Activated CD4-positive, alpha-beta T cell treated with anti-CD3 and anti-CD28 coated beads for 36 hours (primary cell): ENCODE measurements at regions of chr14 and their contacts with region 1.

Region 1: DNA sequence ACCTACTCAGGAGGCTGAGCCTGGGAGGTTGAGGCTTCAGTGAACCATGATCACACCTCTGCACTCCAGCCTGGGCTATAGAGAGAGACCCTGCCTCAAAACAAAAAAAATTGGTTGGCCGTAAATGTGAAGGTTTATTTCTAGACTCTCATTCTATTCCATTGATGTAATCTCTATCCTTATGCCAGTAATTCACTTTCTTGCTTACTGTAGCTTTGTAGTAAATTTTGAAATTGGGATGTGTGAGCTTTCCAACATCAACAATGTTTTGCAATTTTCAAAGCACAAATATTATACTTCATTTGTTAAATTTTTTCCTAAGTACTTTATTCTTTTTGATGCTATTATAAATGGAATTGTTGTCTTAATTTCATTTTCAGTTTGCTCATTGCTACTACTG is 24.6 kb downstream of the LIN52 start:
- DNase-seq: no peak
- ATAC-seq: no peak
- H3K4me3 Mint-ChIP-seq: no peak overlapping the region
- H3K27ac Mint-ChIP-seq: no peak overlapping the region
- H3K4me1 Mint-ChIP-seq: no peaks in the 10 kb centered on the region
- H3K27me3 Mint-ChIP-seq: no peaks in the 10 kb centered on the region

Region 2: GRCh38 chr14:74249433-74250375 is 140.3 kb after region 1 on chr14:
- CTCF ChIA-PET with region 1: interaction called, 12 read pairs
- POLR2A ChIA-PET with region 1: no interaction called
- intact Hi-C with region 1: loop called (anchors 1 kb)
- DNase-seq: no peak
- ATAC-seq: no peak
- H3K4me3 Mint-ChIP-seq: no peak overlapping the region
- H3K27ac Mint-ChIP-seq: no peak overlapping the region
- H3K4me1 Mint-ChIP-seq: peaks cover 7% of the 10 kb centered on the region
- H3K27me3 Mint-ChIP-seq: peaks cover 36% of the 10 kb centered on the region

Region 3: GRCh38 chr14:74257078-74257989 is 148.0 kb after region 1 on chr14:
- CTCF ChIA-PET with region 1: interaction called, 12 read pairs
- POLR2A ChIA-PET with region 1: no interaction called
- intact Hi-C with region 1: loop called in 1 of 2 experiments (anchors 1 kb)
- DNase-seq: peak; percentile 77
- ATAC-seq: peak; percentile 89
- H3K4me3 Mint-ChIP-seq: peak overlapping the region; percentile 69
- H3K27ac Mint-ChIP-seq: peak overlapping the region; percentile 42
- H3K4me1 Mint-ChIP-seq: peaks cover 7% of the 10 kb centered on the region
- H3K27me3 Mint-ChIP-seq: peaks cover 3% of the 10 kb centered on the region